CD8-positive, alpha-beta T cell (primary cell): ENCODE measurements at regions of chr6 and their contacts with region 1.

Region 1: DNA sequence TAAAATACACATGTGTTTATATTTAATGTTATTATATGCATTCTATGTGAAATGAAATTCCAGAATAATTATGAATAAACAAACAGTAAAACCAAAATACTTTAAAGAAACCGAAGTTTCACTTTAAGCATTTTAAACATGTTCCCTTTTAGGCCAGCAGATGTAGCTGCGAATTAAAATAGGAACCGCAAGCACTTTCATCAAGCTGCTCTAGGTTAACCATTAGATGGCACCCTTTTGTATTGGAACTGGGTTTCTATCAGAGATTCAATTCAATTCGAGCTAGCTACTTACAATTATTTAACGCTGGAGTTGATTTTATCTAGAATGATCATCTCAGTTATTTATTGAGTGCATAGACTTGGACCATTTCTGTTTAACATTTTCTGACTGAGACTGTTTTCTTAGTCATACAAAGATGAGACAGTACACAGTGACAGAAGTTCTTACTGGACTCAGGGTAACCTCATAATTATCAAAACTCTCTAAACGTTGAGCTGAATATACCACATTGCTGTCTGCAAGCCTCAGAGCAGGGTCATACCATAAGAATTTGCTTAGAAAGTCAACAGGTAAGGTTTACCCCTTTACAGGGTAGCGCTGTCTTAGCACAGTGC is 8.5 kb downstream of the TMEM242 start:
- DNase-seq: peak in 4 of 9 experiments; percentile 14 to 79 (median 44)
- ATAC-seq: peak; percentile 95
- H3K4me3 ChIP-seq: no peak overlapping the region
- H3K4me3 Mint-ChIP-seq: no peak overlapping the region
- H3K27ac ChIP-seq: no peak overlapping the region
- H3K27ac Mint-ChIP-seq: no peak overlapping the region
- H3K4me1 ChIP-seq: no peaks in the 10 kb centered on the region
- H3K4me1 Mint-ChIP-seq: peaks cover 3% of the 10 kb centered on the region
- H3K27me3 ChIP-seq: no peaks in the 10 kb centered on the region
- H3K27me3 Mint-ChIP-seq: no peaks in the 10 kb centered on the region
- CTCF ChIP-seq: peak; percentile 95

Region 2: GRCh38 chr6:157597446-157598312 is 282.9 kb after region 1 on chr6:
- CTCF ChIA-PET with region 1: interaction called, 19 read pairs
- POLR2A ChIA-PET with region 1: no interaction called
- intact Hi-C with region 1: loop called in 1 of 2 experiments (anchors 1 kb)
- DNase-seq: peak in 6 of 9 experiments; percentile 4 to 68 (median 43)
- ATAC-seq: no peak
- H3K4me3 ChIP-seq: no peak overlapping the region
- H3K4me3 Mint-ChIP-seq: no peak overlapping the region
- H3K27ac ChIP-seq: no peak overlapping the region
- H3K27ac Mint-ChIP-seq: no peak overlapping the region
- H3K4me1 ChIP-seq: no peaks in the 10 kb centered on the region
- H3K4me1 Mint-ChIP-seq: peaks cover 9% of the 10 kb centered on the region
- H3K27me3 ChIP-seq: no peaks in the 10 kb centered on the region
- H3K27me3 Mint-ChIP-seq: no peaks in the 10 kb centered on the region
- CTCF ChIP-seq: no peak

Region 3: GRCh38 chr6:157667211-157668008 is 352.6 kb after region 1 on chr6:
- CTCF ChIA-PET with region 1: interaction called, 112 read pairs
- POLR2A ChIA-PET with region 1: no interaction called
- intact Hi-C with region 1: loop called in 1 of 2 experiments (anchors 1 kb)
- DNase-seq: peak; percentile 25 to 74 (median 56)
- ATAC-seq: peak; percentile 71
- H3K4me3 ChIP-seq: no peak overlapping the region
- H3K4me3 Mint-ChIP-seq: no peak overlapping the region
- H3K27ac ChIP-seq: no peak overlapping the region
- H3K27ac Mint-ChIP-seq: no peak overlapping the region
- H3K4me1 ChIP-seq: no peaks in the 10 kb centered on the region
- H3K4me1 Mint-ChIP-seq: peaks cover 22% of the 10 kb centered on the region
- H3K27me3 ChIP-seq: no peaks in the 10 kb centered on the region
- H3K27me3 Mint-ChIP-seq: no peaks in the 10 kb centered on the region
- CTCF ChIP-seq: peak; percentile 97

Region 4: GRCh38 chr6:158072083-158072721 is 757.4 kb after region 1 on chr6:
- CTCF ChIA-PET with region 1: no interaction called
- POLR2A ChIA-PET with region 1: no interaction called
- intact Hi-C with region 1: loop called (anchors 2 kb)
- DNase-seq: peak; percentile 35 to 81 (median 62)
- ATAC-seq: peak; percentile 80
- H3K4me3 ChIP-seq: no peak overlapping the region
- H3K4me3 Mint-ChIP-seq: no peak overlapping the region
- H3K27ac ChIP-seq: no peak overlapping the region
- H3K27ac Mint-ChIP-seq: no peak overlapping the region
- H3K4me1 ChIP-seq: peaks cover 8% of the 10 kb centered on the region
- H3K4me1 Mint-ChIP-seq: peaks cover 6% of the 10 kb centered on the region
- H3K27me3 ChIP-seq: no peaks in the 10 kb centered on the region
- H3K27me3 Mint-ChIP-seq: no peaks in the 10 kb centered on the region
- CTCF ChIP-seq: peak; percentile 80

Region 5: DNA sequence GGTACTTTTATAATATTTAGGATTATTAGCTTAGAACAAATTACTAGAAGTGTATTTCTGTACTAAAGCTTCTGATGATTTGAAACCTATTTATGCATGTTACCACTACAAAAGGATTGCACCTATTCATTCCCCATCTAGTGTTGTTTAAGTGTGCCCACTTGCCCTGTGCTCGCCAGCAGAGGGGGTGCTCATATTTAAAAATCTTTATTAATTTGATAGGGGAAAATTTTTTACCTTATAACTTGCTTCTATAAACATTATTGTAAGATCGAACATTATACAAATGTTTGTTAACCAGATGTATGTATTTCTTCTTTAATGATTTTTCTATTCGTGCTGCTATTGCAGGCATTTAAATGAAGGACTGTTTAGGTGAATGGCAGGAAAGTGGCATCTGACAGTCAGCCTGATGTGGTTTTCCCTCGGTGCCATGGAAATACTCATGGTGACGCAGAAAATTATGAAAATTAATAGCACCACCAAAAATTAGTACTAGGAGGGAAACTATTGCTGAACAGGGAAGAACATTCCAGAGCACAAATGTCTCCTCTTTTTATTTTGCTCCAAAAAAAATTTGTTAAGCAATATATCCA is 1810.3 kb after region 1 on chr6:
- CTCF ChIA-PET with region 1: no interaction called
- POLR2A ChIA-PET with region 1: no interaction called
- intact Hi-C with region 1: no loop called
- DNase-seq: no peak
- ATAC-seq: no peak
- H3K4me3 ChIP-seq: no peak overlapping the region
- H3K4me3 Mint-ChIP-seq: no peak overlapping the region
- H3K27ac ChIP-seq: no peak overlapping the region
- H3K27ac Mint-ChIP-seq: no peak overlapping the region
- H3K4me1 ChIP-seq: no peaks in the 10 kb centered on the region
- H3K4me1 Mint-ChIP-seq: no peaks in the 10 kb centered on the region
- H3K27me3 ChIP-seq: no peaks in the 10 kb centered on the region
- H3K27me3 Mint-ChIP-seq: no peaks in the 10 kb centered on the region
- CTCF ChIP-seq: peak; percentile 49